GM13977 (cell line): ENCODE measurements at regions of chr2 and their contacts with region 1.

Region 1: GRCh38 chr2:155815886-155816285 is 516.6 kb downstream of the NR4A2 start:
- DNase-seq: peak; percentile 2
- CTCF ChIP-seq: peak; percentile 61

Region 2: GRCh38 chr2:155377266-155377680 is 438.6 kb before region 1 on chr2:
- in situ Hi-C with region 1: loop called (anchors 25 kb)
- DNase-seq: no peak
- CTCF ChIP-seq: peak; percentile 42